BJ (cell line): ENCODE measurements at regions of chr10 and their contacts with region 1.

Region 1: GRCh38 chr10:48273741-48274140 is 755 bp downstream of the FRMPD2 start:
- DNase-seq: no peak
- H3K4me3 ChIP-seq: no peak overlapping the region
- H3K27me3 ChIP-seq: peaks cover 5% of the 10 kb centered on the region
- CTCF ChIP-seq: no peak

Region 2: DNA sequence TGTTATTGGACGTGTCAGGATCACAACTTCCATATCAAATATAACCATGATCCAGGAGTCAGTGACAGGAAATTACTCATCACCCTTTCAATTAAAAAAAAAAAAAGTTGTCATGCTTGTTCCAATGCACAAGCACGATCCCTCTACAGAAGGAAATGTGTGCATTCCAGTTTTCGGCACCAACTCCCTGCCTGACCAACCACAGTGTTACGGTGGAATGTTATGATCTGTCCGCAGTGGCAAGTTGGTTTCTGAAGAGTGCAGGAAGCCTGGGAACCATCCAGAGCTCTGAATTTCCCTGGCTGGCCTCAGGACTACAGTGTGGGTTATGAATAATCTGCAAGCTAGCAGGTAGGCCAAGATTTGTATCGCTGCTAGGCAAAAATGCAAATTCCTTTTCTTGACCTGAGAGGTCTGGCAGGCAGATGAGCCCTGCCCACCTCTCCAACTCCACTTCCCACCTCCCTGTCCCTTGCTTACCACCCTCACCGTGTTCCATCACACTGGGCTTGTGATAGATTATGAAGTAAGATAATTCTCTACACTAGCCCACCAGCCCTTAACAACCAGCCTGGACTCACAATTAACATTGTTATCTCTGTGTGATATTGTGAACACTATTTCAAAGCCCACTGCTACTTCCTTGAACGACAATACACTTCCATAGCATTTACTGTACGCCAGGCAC is 19.6 kb before region 1 on chr10:
- CTCF ChIA-PET with region 1: no interaction called
- POLR2A ChIA-PET with region 1: no interaction called
- DNase-seq: peak; percentile 19
- H3K4me3 ChIP-seq: no peak overlapping the region
- H3K27me3 ChIP-seq: no peaks in the 10 kb centered on the region; the same call in 1 of the 2 replicates
- CTCF ChIP-seq: no peak

Region 3: DNA sequence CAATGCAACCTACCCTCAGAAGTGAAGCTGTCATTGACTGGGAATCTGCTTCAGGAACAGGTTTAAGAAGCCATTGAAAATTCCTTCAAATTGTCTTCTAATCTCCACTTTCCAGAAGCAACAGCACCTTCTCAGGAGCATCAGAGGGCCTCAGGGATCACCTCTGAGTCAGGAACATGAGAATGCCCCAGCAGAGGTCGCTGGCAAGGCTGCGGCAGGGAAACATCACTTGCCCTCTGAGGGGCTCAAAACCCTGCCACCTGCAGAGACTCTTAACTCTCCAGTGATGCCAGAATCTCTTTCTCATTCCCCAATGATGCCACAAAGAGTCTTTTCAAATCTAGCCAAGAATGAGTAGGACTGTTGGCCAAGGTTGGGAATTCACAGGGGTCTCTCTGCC is 26.8 kb after region 1 on chr10:
- CTCF ChIA-PET with region 1: no interaction called
- POLR2A ChIA-PET with region 1: interaction called, 10 read pairs
- DNase-seq: no peak
- H3K4me3 ChIP-seq: no peak overlapping the region
- H3K27me3 ChIP-seq: peaks cover 12% of the 10 kb centered on the region
- CTCF ChIP-seq: no peak